ENCODE measurements at regions of chr1 and their contacts with region 1.

Region 1: GRCh38 chr1:203381151-203381751 is 30.3 kb upstream of the FMOD start:
- DNase-seq: peak; percentile 82
- ATAC-seq: peak; percentile 89
- H3K4me3 ChIP-seq: peak overlapping the region in 2 of 5 experiments; percentile 34 to 49
- H3K4me3 Mint-ChIP-seq: peak overlapping the region; percentile 72
- H3K27ac ChIP-seq: peak overlapping the region; percentile 73 to 82
- H3K27ac Mint-ChIP-seq: peak overlapping the region; percentile 76
- H3K4me1 ChIP-seq: peaks cover 38 to 45% of the 10 kb centered on the region in 2 donors
- H3K4me1 Mint-ChIP-seq: peaks cover 45% of the 10 kb centered on the region
- H3K27me3 ChIP-seq: no peaks in the 10 kb centered on the region
- H3K27me3 Mint-ChIP-seq: no peaks in the 10 kb centered on the region
- CTCF ChIP-seq: no peak

Region 2: GRCh38 chr1:203351037-203352013 is 29.9 kb before region 1 on chr1 and contains the start of gene FMOD:
- CTCF ChIA-PET with region 1: interaction called, 5 read pairs
- POLR2A ChIA-PET with region 1: interaction called, 11 read pairs
- intact Hi-C with region 1: no loop called
- DNase-seq: peak; percentile 32
- ATAC-seq: no peak
- H3K4me3 ChIP-seq: no peak within 1 kb of the TSS
- H3K4me3 Mint-ChIP-seq: no peak within 1 kb of the TSS
- H3K27ac ChIP-seq: no peak within 1 kb of the TSS
- H3K27ac Mint-ChIP-seq: no peak within 1 kb of the TSS
- H3K4me1 ChIP-seq: peaks cover 6 to 10% of the 10 kb centered on the region in 2 donors
- H3K4me1 Mint-ChIP-seq: peaks cover 3% of the 10 kb centered on the region
- H3K27me3 ChIP-seq: peaks cover 0 to 32% (median 5%) of the 10 kb centered on the region in 4 experiments
- H3K27me3 Mint-ChIP-seq: peaks cover 38% of the 10 kb centered on the region
- CTCF ChIP-seq: no peak
- total RNA-seq, gene FMOD: not detected in 2 replicates

Region 3: GRCh38 chr1:203440771-203441170 is 59.5 kb after region 1 on chr1:
- CTCF ChIA-PET with region 1: interaction called, 8 read pairs
- POLR2A ChIA-PET with region 1: no interaction called
- intact Hi-C with region 1: loop called (anchors 2 kb)
- DNase-seq: peak; percentile 38
- ATAC-seq: peak; percentile 39
- H3K4me3 ChIP-seq: no peak overlapping the region
- H3K4me3 Mint-ChIP-seq: no peak overlapping the region
- H3K27ac ChIP-seq: no peak overlapping the region
- H3K27ac Mint-ChIP-seq: no peak overlapping the region
- H3K4me1 ChIP-seq: no peaks in the 10 kb centered on the region
- H3K4me1 Mint-ChIP-seq: no peaks in the 10 kb centered on the region
- H3K27me3 ChIP-seq: peaks cover 0 to 15% (median 0%) of the 10 kb centered on the region in 4 experiments
- H3K27me3 Mint-ChIP-seq: peaks cover 24% of the 10 kb centered on the region
- CTCF ChIP-seq: no peak

Region 4: DNA sequence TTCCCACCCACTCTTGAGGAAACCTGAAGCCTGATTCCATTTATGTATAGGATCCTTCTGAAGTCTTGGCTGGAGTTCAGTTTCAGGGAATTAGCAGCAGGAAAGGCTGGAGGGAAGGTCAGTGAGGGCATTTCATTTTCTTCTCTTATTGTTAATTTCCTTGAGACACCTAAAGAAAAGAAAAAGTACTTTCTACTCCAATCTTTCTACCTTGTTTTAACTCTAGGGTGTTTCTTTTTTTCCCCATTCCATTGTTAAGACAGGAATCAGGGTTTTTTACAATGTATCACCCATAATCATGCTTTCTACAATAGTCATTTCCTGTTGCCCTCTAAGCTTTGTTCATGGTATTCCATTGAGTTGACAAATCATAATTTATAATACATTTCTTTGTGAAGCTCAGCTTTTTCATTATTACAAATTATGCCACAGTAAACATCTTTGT is 507.6 kb after region 1 on chr1:
- CTCF ChIA-PET with region 1: no interaction called
- POLR2A ChIA-PET with region 1: no interaction called
- intact Hi-C with region 1: no loop called
- DNase-seq: no peak
- ATAC-seq: no peak
- H3K4me3 ChIP-seq: no peak overlapping the region
- H3K4me3 Mint-ChIP-seq: no peak overlapping the region
- H3K27ac ChIP-seq: no peak overlapping the region
- H3K27ac Mint-ChIP-seq: no peak overlapping the region
- H3K4me1 ChIP-seq: no peaks in the 10 kb centered on the region
- H3K4me1 Mint-ChIP-seq: no peaks in the 10 kb centered on the region
- H3K27me3 ChIP-seq: peaks cover 0 to 2% (median 0%) of the 10 kb centered on the region in 4 experiments
- H3K27me3 Mint-ChIP-seq: no peaks in the 10 kb centered on the region
- CTCF ChIP-seq: no peak